Endothelial cell of umbilical vein (primary cell): ENCODE measurements at regions of chr3 and their contacts with region 1.

Region 1: GRCh38 chr3:137032465-137033120 is 74.8 kb downstream of the IL20RB start:
- DNase-seq: peak; percentile 86
- H3K4me3 ChIP-seq: peak overlapping the region; percentile 23 to 61 (median 26)
- H3K27ac ChIP-seq: no peak overlapping the region
- H3K4me1 ChIP-seq: peaks cover 10% of the 10 kb centered on the region
- H3K27me3 ChIP-seq: peaks cover 10 to 12% of the 10 kb centered on the region in 2 experiments
- CTCF ChIP-seq: peak; percentile 93 to 94
- POLR2A ChIP-seq: no peak

Region 2: DNA sequence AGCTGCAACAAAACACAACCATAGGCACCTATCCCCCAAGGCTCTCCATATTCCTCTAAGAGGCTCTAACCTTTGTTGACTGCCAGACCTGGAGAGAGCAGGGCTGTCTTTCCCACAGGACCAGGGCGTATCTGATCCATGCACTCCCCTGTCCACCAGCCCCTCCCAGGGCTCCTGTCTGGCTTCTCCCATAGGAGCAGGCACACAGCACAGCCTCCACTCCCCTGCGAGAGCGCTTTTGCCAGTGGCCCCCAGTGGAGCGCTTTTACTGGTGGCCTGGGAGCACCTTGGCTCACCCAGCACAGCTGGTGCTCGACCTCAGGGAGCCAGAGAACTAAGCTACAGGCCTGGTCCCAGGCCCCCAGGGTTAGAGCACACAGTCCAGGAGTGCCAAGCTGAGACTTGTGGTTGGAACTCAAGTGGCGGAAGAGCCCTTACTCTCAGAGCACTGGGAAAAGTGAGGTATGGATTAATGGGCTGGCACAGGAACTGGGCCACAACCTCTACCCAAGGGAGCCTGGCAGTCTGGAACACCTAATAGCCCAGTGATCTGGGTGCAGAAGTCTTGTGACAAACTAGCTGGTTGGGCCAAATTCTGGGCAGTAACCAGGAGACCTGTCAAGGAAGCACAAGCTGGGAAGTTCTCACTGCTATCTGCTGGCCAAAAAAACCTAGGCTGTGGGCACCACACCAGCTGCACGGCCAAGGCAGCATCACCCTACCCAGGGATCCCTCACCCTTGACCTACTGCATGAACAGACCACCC is 987.4 kb before region 1 on chr3:
- CTCF ChIA-PET with region 1: no interaction called
- POLR2A ChIA-PET with region 1: no interaction called
- dilution Hi-C with region 1: no loop called
- intact Hi-C with region 1: no loop called
- DNase-seq: no peak
- H3K4me3 ChIP-seq: no peak overlapping the region
- H3K27ac ChIP-seq: no peak overlapping the region
- H3K4me1 ChIP-seq: peaks cover 3% of the 10 kb centered on the region
- H3K27me3 ChIP-seq: no peaks in the 10 kb centered on the region
- CTCF ChIP-seq: no peak
- POLR2A ChIP-seq: no peak

Region 3: DNA sequence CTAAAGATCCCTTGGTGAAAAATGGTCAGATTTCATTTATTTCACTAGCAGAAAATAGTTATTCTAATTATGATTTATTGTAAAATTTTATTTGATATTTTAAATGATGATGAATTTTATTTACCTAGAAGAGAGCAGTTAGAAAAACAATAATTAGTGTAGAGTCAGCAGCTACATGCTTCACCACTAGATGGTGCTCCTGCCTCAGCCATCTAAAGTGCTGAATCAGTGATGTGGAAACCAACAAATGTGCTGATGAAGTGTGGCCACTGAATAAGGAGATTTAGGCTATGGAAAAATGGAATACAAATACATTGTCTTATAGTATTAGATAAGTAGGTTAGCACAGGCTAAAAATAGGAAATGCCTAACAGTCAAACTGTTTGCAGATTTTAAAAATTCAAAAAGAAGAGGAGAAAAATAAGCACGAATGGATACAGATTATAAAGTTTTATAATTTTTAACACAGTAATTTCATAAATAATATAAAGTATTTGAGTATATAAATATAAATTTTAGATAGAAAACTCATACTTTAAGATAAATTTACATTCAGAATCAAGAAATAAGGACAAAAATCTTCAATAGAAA is 957.3 kb before region 1 on chr3:
- CTCF ChIA-PET with region 1: interaction called, 6 read pairs
- POLR2A ChIA-PET with region 1: no interaction called
- dilution Hi-C with region 1: no loop called
- intact Hi-C with region 1: loop called (anchors 5 kb)
- DNase-seq: peak; percentile 81
- H3K4me3 ChIP-seq: no peak overlapping the region
- H3K27ac ChIP-seq: no peak overlapping the region
- H3K4me1 ChIP-seq: no peaks in the 10 kb centered on the region
- H3K27me3 ChIP-seq: no peaks in the 10 kb centered on the region
- CTCF ChIP-seq: peak; percentile 63 to 76
- POLR2A ChIP-seq: no peak

Region 4: DNA sequence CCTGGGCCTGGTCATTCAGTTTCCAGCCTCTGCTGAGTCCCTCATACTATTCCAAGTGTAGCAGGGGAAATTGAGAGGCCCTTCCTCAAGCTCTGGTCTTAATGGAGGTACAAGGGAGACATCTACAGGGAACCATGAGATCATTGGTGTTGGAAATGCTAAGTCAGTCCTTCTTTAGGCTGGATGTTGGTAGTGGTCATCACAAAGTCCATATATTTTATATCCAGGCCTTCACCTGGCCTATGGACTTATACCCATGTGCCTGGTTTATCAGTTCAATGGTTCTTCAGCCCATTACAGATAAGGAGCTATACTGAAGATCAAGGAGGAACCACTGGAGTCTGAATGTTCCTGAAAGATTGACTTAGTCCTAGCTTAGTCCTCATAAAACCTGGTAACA is 415.4 kb before region 1 on chr3:
- CTCF ChIA-PET with region 1: no interaction called
- POLR2A ChIA-PET with region 1: no interaction called
- dilution Hi-C with region 1: no loop called
- intact Hi-C with region 1: no loop called
- DNase-seq: no peak
- H3K4me3 ChIP-seq: no peak overlapping the region
- H3K27ac ChIP-seq: no peak overlapping the region
- H3K4me1 ChIP-seq: no peaks in the 10 kb centered on the region
- H3K27me3 ChIP-seq: no peaks in the 10 kb centered on the region
- CTCF ChIP-seq: no peak
- POLR2A ChIP-seq: no peak

Region 5: GRCh38 chr3:137105277-137105977 is 72.8 kb after region 1 on chr3:
- CTCF ChIA-PET with region 1: interaction called, 14 read pairs
- POLR2A ChIA-PET with region 1: no interaction called
- dilution Hi-C with region 1: no loop called
- intact Hi-C with region 1: loop called (anchors 2 kb)
- DNase-seq: peak; percentile 74
- H3K4me3 ChIP-seq: no peak overlapping the region
- H3K27ac ChIP-seq: no peak overlapping the region
- H3K4me1 ChIP-seq: no peaks in the 10 kb centered on the region
- H3K27me3 ChIP-seq: peaks cover 12 to 17% of the 10 kb centered on the region in 2 experiments
- CTCF ChIP-seq: peak; percentile 42 to 50
- POLR2A ChIP-seq: no peak

Region 6: GRCh38 chr3:137692803-137693431 is 660.3 kb after region 1 on chr3:
- CTCF ChIA-PET with region 1: no interaction called
- POLR2A ChIA-PET with region 1: no interaction called
- dilution Hi-C with region 1: no loop called
- intact Hi-C with region 1: loop called (anchors 2 kb)
- DNase-seq: no peak
- H3K4me3 ChIP-seq: no peak overlapping the region
- H3K27ac ChIP-seq: no peak overlapping the region
- H3K4me1 ChIP-seq: no peaks in the 10 kb centered on the region
- H3K27me3 ChIP-seq: no peaks in the 10 kb centered on the region
- CTCF ChIP-seq: peak in 1 of 2 donors; percentile 18
- POLR2A ChIP-seq: no peak

Region 7: DNA sequence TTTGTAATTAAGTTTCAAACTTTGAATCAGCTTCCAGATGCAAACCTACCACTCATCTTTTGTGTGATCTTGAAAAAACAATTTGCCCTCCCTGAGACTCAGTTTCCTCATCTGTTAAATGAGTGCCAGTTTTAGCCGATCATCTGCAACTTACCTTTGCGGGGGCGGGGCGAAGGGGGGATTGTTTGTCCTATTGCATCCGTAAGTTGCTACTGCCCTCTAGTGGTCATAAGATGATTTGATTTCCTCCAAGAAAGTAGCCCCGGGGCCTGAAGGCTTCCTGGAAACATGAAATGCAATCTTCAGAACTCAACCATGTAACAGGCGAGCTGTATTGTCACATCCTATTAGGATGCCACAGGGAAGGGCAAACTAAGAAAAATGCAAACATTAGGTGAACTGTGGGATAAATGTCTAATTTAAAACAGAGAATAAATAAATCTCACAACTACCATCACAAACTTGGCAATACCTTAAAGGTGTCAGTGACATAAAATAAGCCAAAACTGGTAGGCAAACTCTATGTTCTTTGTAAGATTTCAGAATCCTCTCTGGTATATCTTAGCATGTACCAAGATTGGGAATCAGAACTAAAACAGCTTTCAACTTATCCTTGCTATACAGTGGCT is 913.9 kb after region 1 on chr3:
- CTCF ChIA-PET with region 1: interaction called, 42 read pairs
- POLR2A ChIA-PET with region 1: no interaction called
- dilution Hi-C with region 1: no loop called
- intact Hi-C with region 1: loop called (anchors 1 kb)
- DNase-seq: peak; percentile 57
- H3K4me3 ChIP-seq: no peak overlapping the region
- H3K27ac ChIP-seq: no peak overlapping the region
- H3K4me1 ChIP-seq: no peaks in the 10 kb centered on the region
- H3K27me3 ChIP-seq: no peaks in the 10 kb centered on the region
- CTCF ChIP-seq: peak; percentile 62 to 67
- POLR2A ChIP-seq: no peak